ENCODE measurements at regions of chr14 and their contacts with region 1.

Region 1: DNA sequence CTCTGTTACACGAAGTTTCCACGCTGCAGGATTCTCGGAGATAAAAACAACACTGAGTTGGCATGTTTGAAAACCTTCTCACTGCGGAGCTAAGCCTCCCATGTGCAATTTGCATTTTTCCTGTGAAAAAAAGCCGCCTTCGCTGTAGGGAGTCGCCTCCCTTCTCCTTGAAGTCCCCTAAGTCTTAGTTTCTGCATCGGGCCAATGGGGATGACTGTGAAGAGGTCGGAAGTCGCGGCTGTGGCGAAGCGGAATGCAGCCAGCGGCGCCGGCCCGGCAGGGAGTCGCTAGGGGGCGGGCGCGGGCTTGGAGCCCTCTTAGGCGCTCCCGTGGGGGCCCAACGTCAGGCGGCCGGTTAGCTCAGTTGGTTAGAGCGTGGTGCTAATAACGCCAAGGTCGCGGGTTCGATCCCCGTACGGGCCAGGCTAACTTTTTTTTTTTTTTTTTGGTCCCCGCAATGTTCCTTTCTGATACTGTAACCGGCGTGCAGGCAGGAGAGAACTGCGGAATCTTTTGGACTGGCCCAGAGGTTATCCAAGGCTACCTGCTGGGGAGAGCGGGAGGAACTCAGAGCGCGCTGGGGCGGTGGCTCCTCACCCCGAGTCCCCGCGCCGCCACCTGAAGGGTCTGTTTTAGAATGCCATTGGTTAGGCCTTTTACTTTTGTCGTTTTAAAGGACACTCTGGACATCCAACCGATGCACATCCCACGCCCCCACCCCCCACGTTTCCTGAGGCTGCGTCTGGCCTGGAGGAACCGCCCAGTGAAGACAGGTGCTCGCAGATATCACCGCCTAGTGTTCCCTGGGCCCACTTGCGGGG is 2.6 kb upstream of the ZNF839 start:
- DNase-seq: peak; percentile 92 to 97 (median 94)
- ATAC-seq: peak; percentile 70 to 83 (median 80)
- H3K4me3 ChIP-seq: peak overlapping the region; percentile 27 to 74 (median 56)
- H3K27ac ChIP-seq: peak overlapping the region; percentile 49 to 97 (median 94)
- H3K4me1 ChIP-seq: peaks cover 0 to 56% (median 31%) of the 10 kb centered on the region in 12 donors
- H3K27me3 ChIP-seq: no peaks in the 10 kb centered on the region
- CTCF ChIP-seq: peak; percentile 60 to 95 (median 82)
- POLR2A ChIP-seq: peak in 1 of 2 donors; percentile 30

Region 2: DNA sequence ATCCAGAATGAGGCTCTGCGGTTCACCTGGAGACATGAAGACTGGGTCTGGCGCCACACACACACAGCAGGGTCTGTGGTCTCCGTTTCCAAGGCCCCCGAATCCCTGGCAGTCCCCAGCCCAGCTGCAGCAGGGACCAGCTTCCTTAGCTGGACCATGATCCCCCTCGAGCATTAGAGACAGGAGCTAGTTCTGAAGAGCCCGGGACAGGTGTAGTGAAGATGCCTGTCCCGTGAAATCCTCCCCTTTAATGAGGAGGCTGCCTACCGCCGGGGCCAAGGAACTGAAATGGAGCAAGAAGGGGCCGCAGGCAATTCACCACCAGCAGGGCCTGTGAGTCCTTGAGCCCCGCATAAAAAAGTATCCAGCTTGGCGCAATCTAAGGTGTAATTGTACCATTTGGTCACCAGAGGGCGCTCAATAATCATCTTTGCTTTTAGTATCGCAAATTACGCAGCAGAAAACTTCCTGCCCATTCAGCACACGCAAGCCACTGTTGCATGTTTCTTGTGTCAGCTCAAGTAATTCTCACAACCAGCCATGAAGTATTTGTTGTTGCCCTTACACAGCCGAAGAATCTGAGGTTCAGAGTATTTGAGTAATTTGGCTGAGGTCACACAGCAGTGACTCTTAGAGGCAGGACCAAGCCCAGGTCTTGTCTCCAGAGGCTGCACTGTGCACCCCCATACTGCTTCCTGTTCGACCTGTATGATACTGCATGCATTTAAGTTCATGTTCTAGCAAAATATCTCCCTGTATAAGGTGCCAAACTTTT is 609.7 kb before region 1 on chr14:
- intact Hi-C with region 1: loop called in 1 of 10 experiments (anchors 10 kb)
- DNase-seq: peak in 4 of 5 donors; percentile 40 to 59 (median 55)
- ATAC-seq: peak; percentile 29 to 73 (median 54)
- H3K4me3 ChIP-seq: peak overlapping the region in 1 of 12 donors; percentile 8
- H3K27ac ChIP-seq: peak overlapping the region in 10 of 12 donors; percentile 51 to 89 (median 82)
- H3K4me1 ChIP-seq: peaks cover 0 to 28% (median 20%) of the 10 kb centered on the region in 12 donors
- H3K27me3 ChIP-seq: peaks cover 0 to 11% (median 0%) of the 10 kb centered on the region in 9 donors
- CTCF ChIP-seq: peak; percentile 64 to 91 (median 88)
- POLR2A ChIP-seq: no peak

Region 3: GRCh38 chr14:102046343-102047278 is 270.3 kb before region 1 on chr14:
- intact Hi-C with region 1: loop called in 4 of 10 experiments (anchors 5 to 10 kb)
- DNase-seq: peak; percentile 82 to 91 (median 86)
- ATAC-seq: peak; percentile 90 to 93 (median 91)
- H3K4me3 ChIP-seq: no peak overlapping the region
- H3K27ac ChIP-seq: peak overlapping the region in 4 of 12 donors; percentile 18 to 83 (median 52)
- H3K4me1 ChIP-seq: peaks cover 0 to 40% (median 11%) of the 10 kb centered on the region in 12 donors
- H3K27me3 ChIP-seq: no peaks in the 10 kb centered on the region
- CTCF ChIP-seq: peak in 11 of 12 donors; percentile 30 to 81 (median 57)
- POLR2A ChIP-seq: no peak

Region 4: DNA sequence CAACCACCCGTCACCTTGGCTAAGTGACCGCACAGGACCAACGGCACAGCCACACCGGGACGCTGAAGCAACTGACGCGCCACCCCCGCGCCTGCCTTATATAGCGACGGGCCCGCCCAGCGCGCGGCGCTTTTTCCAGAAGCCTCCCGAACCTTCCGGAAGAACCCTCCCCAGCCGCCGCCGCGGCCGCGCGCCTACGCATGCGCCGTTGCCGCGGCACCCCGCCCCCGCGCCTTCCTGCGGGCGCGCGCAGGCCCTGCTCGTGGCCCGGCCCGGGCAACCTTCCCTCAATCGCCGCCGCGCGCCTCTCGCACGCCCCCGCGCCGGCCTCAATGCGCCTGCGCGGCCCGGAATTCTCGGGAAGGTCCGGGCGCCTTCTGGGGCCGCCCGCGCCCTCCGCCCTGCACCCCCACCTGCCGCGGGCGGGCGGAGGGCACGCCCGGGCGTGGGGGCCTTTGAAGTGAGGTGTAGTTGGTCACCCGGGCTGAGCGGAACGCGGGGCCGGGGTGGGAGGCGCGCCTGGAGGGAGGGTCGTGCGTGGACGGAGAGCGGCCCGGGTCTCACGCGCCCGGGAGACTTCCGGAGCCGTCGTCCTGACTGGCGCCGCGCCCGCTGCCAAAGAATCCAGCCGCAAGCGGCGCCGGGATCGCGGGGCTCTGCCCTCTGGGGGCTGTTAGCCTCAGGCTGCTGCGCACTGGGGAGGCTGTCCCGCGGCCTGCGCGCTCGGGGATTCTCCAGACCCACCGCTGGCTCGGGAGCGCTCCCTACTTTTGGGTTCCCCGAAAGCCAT is 229.8 kb before region 1 on chr14 and contains the start of gene HSP90AA1:
- intact Hi-C with region 1: loop called in 3 of 10 experiments (anchors 5 to 10 kb)
- DNase-seq: peak; percentile 94 to 97 (median 96)
- ATAC-seq: peak; percentile 71 to 93 (median 86)
- H3K4me3 ChIP-seq: peak within 1 kb of the TSS; percentile 73 to 99 (median 92)
- H3K27ac ChIP-seq: peak within 1 kb of the TSS; percentile 98 to 100 (median 100)
- H3K4me1 ChIP-seq: peaks cover 14 to 53% (median 39%) of the 10 kb centered on the region in 12 donors
- H3K27me3 ChIP-seq: no peaks in the 10 kb centered on the region
- CTCF ChIP-seq: peak in 5 of 12 donors; percentile 13 to 54 (median 36)
- POLR2A ChIP-seq: peak; percentile 61 to 97
- total RNA-seq, gene HSP90AA1: 351 to 854 (median 427) TPM

Region 5: DNA sequence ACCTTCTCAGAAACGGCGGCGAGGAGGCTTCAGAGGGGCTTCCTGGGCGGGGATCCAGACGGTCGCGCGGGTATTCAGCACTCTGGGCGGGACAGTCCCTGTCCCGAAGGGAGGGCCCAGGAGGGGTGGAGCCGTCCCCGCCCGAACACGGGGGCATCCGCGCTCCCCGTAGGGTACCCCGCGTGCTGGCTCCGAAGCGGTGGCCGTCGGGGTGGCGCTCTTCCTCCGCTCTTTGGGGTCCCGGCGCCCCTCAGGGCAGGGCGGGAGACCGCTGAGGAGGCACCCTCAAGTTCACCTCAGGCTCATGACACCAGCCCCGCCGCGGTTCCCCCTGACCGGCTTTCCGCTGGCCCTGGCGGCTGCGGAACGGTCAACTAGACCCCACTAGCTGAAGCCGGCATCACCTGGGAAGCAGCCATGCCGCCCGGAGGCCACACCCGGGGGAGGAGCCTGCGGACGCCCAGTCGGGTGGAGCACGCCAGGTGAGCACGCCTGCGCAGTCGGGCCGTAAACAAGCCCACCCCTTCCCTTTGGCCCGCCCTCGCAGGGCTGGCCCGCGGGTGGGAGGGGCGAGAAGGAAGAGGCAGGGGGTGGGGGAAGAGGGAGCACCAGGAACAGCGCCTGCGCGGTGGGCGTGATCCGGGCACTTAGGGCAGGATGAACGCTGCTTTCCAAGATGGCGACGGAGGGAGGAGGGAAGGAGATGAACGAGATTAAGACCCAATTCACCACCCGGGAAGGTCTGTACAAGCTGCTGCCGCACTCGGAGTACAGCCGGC is 177.5 kb before region 1 on chr14 and contains the start of gene WDR20:
- intact Hi-C with region 1: loop called in 4 of 10 experiments (anchors 5 to 10 kb)
- DNase-seq: peak; percentile 98 to 99 (median 99)
- ATAC-seq: peak; percentile 99 to 100 (median 100)
- H3K4me3 ChIP-seq: peak within 1 kb of the TSS; percentile 74 to 100 (median 96)
- H3K27ac ChIP-seq: peak within 1 kb of the TSS; percentile 30 to 92 (median 86)
- H3K4me1 ChIP-seq: peaks cover 0 to 35% (median 22%) of the 10 kb centered on the region in 12 donors
- H3K27me3 ChIP-seq: no peaks in the 10 kb centered on the region
- CTCF ChIP-seq: no peak
- POLR2A ChIP-seq: peak in 1 of 2 donors; percentile 49
- total RNA-seq, gene WDR20: 15.8 to 26.5 (median 21.2) TPM

Region 6: GRCh38 chr14:102235275-102235897 is 81.6 kb before region 1 on chr14:
- intact Hi-C with region 1: loop called (anchors 1 to 2 kb)
- DNase-seq: peak; percentile 82 to 90 (median 85)
- ATAC-seq: peak; percentile 88 to 96 (median 94)
- H3K4me3 ChIP-seq: peak overlapping the region in 10 of 12 donors; percentile 25 to 58 (median 45)
- H3K27ac ChIP-seq: peak overlapping the region in 5 of 12 donors; percentile 12 to 46 (median 17)
- H3K4me1 ChIP-seq: peaks cover 0 to 9% (median 2%) of the 10 kb centered on the region in 12 donors
- H3K27me3 ChIP-seq: no peaks in the 10 kb centered on the region
- CTCF ChIP-seq: peak; percentile 81 to 91 (median 88)
- POLR2A ChIP-seq: no peak

Region 7: DNA sequence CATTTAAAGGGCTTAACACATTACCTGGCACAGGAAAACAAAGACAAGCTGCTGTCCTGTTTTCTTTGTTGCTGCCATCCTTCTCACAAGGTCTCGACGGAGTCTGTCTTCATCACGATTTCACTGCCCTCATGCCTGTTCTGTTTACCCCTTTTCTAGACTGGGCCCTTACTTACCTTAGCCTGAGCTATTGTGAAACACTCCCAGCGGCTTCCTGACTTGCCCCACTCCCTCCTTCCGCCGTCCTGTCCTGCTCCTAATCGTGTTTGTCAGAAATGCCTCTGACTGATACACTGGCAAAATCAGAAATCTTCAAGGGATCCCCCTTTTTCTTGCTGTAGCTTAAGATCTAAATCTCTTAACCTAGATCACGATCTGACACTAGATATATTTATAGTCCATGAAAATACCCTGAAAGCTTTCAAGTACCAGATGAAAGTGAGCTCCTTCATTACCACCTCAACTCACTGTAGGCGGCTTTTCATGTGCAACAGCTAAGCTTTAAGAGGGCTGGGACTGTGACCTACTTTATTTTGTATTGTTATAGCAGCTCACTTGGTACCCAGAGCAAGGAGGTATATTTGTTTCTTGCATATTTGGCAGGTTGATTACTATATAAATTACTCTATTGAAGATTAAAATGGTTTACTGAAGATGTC is 77.9 kb after region 1 on chr14:
- intact Hi-C with region 1: no loop called
- DNase-seq: no peak
- ATAC-seq: no peak
- H3K4me3 ChIP-seq: no peak overlapping the region
- H3K27ac ChIP-seq: no peak overlapping the region
- H3K4me1 ChIP-seq: peaks cover 0 to 19% (median 7%) of the 10 kb centered on the region in 12 donors
- H3K27me3 ChIP-seq: no peaks in the 10 kb centered on the region
- CTCF ChIP-seq: no peak
- POLR2A ChIP-seq: no peak

Region 8: DNA sequence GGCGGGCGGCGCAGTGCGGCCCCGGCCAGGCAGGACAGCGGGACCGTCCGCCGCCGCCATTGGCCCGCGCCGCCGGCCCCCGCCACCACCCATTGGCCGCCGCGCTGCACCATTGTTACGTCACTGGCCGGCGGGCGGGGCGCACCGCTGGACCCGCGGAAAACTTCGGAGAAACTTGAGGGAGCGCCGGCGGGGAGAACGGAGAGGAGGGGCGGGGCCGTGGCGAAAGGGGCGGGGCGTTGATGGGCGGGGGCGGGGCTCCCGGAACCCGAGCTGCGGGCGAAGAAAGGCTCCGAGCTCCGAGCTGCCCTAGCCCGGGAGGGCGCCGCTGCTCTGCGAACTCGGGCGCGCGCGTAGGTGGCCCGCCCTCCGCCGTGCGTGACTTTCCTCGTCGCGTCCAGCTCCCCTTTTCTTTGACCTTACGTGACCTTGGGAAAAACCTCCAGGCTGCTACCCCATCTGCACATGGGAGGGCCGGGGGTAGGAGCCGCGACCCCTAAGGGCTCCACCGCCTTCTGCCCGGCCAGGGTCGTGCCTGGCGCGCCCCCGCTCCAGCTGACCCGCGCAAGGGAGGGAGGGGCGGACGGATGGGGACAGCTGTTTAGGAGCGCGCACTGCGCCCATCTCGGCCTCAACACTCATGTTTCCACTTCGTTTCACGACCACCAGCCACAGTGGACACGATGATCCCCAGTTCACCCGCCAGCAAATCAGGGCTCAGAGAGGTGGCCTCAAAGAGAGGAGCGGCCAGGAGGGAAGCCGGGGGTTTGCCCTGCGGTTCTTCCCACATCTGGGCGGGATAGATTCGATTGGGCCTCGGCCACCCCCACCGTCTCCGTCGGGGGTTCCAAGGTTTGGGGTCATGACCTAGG is 193.0 kb after region 1 on chr14 and contains the start of gene ANKRD9:
- intact Hi-C with region 1: loop called in 4 of 10 experiments (anchors 5 to 10 kb)
- DNase-seq: peak; percentile 96 to 98 (median 97)
- ATAC-seq: peak; percentile 68 to 83 (median 74)
- H3K4me3 ChIP-seq: peak within 1 kb of the TSS; percentile 47 to 90 (median 72)
- H3K27ac ChIP-seq: peak within 1 kb of the TSS; percentile 88 to 100 (median 96)
- H3K4me1 ChIP-seq: peaks cover 0 to 42% (median 14%) of the 10 kb centered on the region in 12 donors
- H3K27me3 ChIP-seq: no peaks in the 10 kb centered on the region
- CTCF ChIP-seq: peak in 3 of 12 donors; percentile 14 to 18 (median 17)
- POLR2A ChIP-seq: peak in 1 of 2 donors; percentile 60
- total RNA-seq, gene ANKRD9: 77.6 to 271 (median 141) TPM